CD4-positive, alpha-beta T cell (primary cell): ENCODE measurements at regions of chr14 and their contacts with region 1.

Region 1: DNA sequence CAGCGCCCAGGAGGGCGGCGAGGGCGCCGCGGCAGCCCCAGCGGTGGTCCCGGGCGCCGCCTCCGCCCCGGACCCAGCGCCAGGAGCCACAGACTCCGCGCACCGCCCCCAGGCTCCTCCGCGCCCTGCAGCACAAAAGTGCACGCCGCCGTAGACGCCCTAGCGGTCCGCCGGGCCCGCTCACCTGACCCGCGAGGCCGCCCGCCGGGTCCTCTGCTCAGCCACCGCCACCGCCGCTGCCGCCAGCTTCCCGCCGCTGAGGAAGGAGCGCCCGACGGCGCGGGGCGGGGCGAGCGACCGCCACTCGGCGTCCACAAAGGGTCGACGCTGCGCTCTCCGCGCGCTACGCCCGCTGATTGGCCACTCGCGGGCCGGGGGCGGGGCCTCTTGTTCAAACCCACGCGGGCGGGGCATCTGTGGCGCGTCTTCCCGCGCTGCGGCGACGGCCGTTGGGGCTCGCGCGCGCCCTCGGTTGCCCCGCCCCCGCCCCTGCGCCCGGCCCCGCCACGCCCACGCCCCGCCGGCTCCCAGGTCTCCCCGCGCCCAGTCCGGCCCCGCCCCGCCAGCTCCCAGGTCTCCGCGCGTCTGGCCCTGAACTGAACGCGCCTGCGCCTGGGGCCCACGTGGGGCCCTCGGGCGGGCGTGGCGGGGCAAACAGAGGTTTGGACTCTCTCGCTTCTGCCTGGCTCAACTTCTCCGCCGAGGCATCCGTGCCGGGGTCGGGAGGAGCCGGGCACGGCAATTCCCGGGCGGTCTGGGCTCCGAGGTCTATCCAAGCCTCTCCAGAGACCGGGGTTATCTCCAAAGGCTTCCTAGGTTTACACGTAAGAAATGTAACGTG is at the start of gene CDCA4:
- DNase-seq: peak; percentile 94 to 99 (median 98)
- ATAC-seq: peak; percentile 80
- H3K4me3 ChIP-seq: peak within 1 kb of the TSS; percentile 73
- H3K4me3 Mint-ChIP-seq: peak within 1 kb of the TSS; percentile 97
- H3K27ac ChIP-seq: peak within 1 kb of the TSS; percentile 71 to 73
- H3K27ac Mint-ChIP-seq: peak within 1 kb of the TSS; percentile 93
- H3K4me1 ChIP-seq: peaks cover 62% of the 10 kb centered on the region
- H3K4me1 Mint-ChIP-seq: peaks cover 62% of the 10 kb centered on the region
- H3K27me3 ChIP-seq: no peaks in the 10 kb centered on the region
- H3K27me3 Mint-ChIP-seq: no peaks in the 10 kb centered on the region
- CTCF ChIP-seq: no peak
- total RNA-seq, gene CDCA4: 17.7 to 18.8 TPM

Region 2: GRCh38 chr14:104985675-104986525 is 35.1 kb before region 1 on chr14 and contains the start of gene CLBA1:
- CTCF ChIA-PET with region 1: no interaction called
- POLR2A ChIA-PET with region 1: interaction called, 6 read pairs
- intact Hi-C with region 1: loop called (anchors 1 to 2 kb)
- DNase-seq: peak; percentile 73 to 97 (median 86)
- ATAC-seq: peak; percentile 96
- H3K4me3 ChIP-seq: peak within 1 kb of the TSS; percentile 56
- H3K4me3 Mint-ChIP-seq: peak within 1 kb of the TSS; percentile 75
- H3K27ac ChIP-seq: no peak within 1 kb of the TSS
- H3K27ac Mint-ChIP-seq: peak within 1 kb of the TSS; percentile 80
- H3K4me1 ChIP-seq: peaks cover 16% of the 10 kb centered on the region
- H3K4me1 Mint-ChIP-seq: no peaks in the 10 kb centered on the region
- H3K27me3 ChIP-seq: no peaks in the 10 kb centered on the region
- H3K27me3 Mint-ChIP-seq: no peaks in the 10 kb centered on the region
- CTCF ChIP-seq: no peak
- total RNA-seq, gene CLBA1: 1.7 to 1.8 TPM

Region 3: GRCh38 chr14:105059035-105059924 is 38.2 kb after region 1 on chr14:
- CTCF ChIA-PET with region 1: no interaction called
- POLR2A ChIA-PET with region 1: interaction called, 7 read pairs
- intact Hi-C with region 1: loop called (anchors 1 to 2 kb)
- DNase-seq: peak in 11 of 14 experiments; percentile 27 to 86 (median 74)
- ATAC-seq: peak; percentile 77
- H3K4me3 ChIP-seq: peak overlapping the region; percentile 82
- H3K4me3 Mint-ChIP-seq: peak overlapping the region; percentile 89
- H3K27ac ChIP-seq: peak overlapping the region; percentile 86 to 95
- H3K27ac Mint-ChIP-seq: peak overlapping the region; percentile 91
- H3K4me1 ChIP-seq: peaks cover 63% of the 10 kb centered on the region
- H3K4me1 Mint-ChIP-seq: peaks cover 53% of the 10 kb centered on the region
- H3K27me3 ChIP-seq: no peaks in the 10 kb centered on the region
- H3K27me3 Mint-ChIP-seq: no peaks in the 10 kb centered on the region
- CTCF ChIP-seq: peak; percentile 35

Region 4: GRCh38 chr14:105065280-105066228 is 44.5 kb after region 1 on chr14 and contains the start of gene GPR132:
- CTCF ChIA-PET with region 1: no interaction called
- POLR2A ChIA-PET with region 1: interaction called, 23 read pairs
- intact Hi-C with region 1: loop called in 1 of 2 experiments (anchors 2 kb)
- DNase-seq: peak; percentile 81 to 99 (median 86)
- ATAC-seq: peak; percentile 87
- H3K4me3 ChIP-seq: peak within 1 kb of the TSS; percentile 82
- H3K4me3 Mint-ChIP-seq: peak within 1 kb of the TSS; percentile 100
- H3K27ac ChIP-seq: peak within 1 kb of the TSS; percentile 94 to 95
- H3K27ac Mint-ChIP-seq: peak within 1 kb of the TSS; percentile 91
- H3K4me1 ChIP-seq: peaks cover 98% of the 10 kb centered on the region
- H3K4me1 Mint-ChIP-seq: peaks cover 72% of the 10 kb centered on the region
- H3K27me3 ChIP-seq: no peaks in the 10 kb centered on the region
- H3K27me3 Mint-ChIP-seq: no peaks in the 10 kb centered on the region
- CTCF ChIP-seq: no peak
- total RNA-seq, gene GPR132: 64.4 to 66.7 TPM

Region 5: GRCh38 chr14:105414456-105415371 is 393.7 kb after region 1 on chr14:
- CTCF ChIA-PET with region 1: no interaction called
- POLR2A ChIA-PET with region 1: no interaction called
- intact Hi-C with region 1: no loop called
- DNase-seq: peak in 13 of 14 experiments; percentile 22 to 83 (median 50)
- ATAC-seq: peak; percentile 83
- H3K4me3 ChIP-seq: peak overlapping the region; percentile 30
- H3K4me3 Mint-ChIP-seq: peak overlapping the region; percentile 83
- H3K27ac ChIP-seq: no peak overlapping the region
- H3K27ac Mint-ChIP-seq: no peak overlapping the region
- H3K4me1 ChIP-seq: peaks cover 36% of the 10 kb centered on the region
- H3K4me1 Mint-ChIP-seq: peaks cover 23% of the 10 kb centered on the region
- H3K27me3 ChIP-seq: peaks cover 23 to 30% of the 10 kb centered on the region in 2 experiments
- H3K27me3 Mint-ChIP-seq: peaks cover 11% of the 10 kb centered on the region
- CTCF ChIP-seq: peak; percentile 82